Activated T-helper 1 cell treated with anti-CD3 and anti-CD28 coated beads, Interleukin-12 subunit alpha, Interleukin-12 subunit beta, Interleukin-2, Interleukin-4 antibody, amounts not matched to agents 30 ng/mL and 10 ng/mL and 1 ng/mL, durations not matched to agents 14 hours and 24 hours and 36 hours (primary cell): ENCODE measurements at regions of chr2 and their contacts with region 1.

Region 1: DNA sequence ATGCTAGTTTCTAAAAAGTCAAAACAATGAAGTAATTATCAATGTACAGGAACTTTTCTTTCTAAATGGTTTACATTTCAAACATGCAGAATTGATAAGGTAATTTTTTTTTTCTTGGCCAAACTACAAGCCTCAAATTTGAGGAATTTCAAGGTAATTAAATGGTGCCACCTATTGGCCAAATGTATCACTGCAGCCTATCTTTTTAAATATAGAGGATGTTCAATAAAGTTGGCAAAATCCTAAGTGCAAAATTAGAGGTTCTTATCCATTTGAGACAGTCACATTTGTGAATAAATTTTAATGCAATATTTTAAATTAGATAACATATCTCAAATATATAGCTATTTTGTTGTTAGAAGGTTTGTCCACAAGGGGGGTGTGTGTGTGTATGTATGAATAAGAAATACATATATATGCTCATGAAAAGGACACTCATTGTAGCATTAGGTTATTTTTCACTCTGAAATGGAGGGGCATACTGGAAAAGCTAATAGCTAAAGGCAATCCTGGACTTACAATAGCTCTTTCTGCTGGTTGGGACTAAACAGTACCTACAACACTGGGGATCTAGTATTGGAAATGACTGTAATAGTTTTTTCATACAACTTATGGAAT is 26.2 kb downstream of the MMADHC start:
- DNase-seq: no peak
- H3K4me3 Mint-ChIP-seq: no peak overlapping the region
- H3K27ac Mint-ChIP-seq: no peak overlapping the region
- H3K4me1 Mint-ChIP-seq: no peaks in the 10 kb centered on the region
- H3K27me3 Mint-ChIP-seq: peaks cover 4% of the 10 kb centered on the region

Region 2: DNA sequence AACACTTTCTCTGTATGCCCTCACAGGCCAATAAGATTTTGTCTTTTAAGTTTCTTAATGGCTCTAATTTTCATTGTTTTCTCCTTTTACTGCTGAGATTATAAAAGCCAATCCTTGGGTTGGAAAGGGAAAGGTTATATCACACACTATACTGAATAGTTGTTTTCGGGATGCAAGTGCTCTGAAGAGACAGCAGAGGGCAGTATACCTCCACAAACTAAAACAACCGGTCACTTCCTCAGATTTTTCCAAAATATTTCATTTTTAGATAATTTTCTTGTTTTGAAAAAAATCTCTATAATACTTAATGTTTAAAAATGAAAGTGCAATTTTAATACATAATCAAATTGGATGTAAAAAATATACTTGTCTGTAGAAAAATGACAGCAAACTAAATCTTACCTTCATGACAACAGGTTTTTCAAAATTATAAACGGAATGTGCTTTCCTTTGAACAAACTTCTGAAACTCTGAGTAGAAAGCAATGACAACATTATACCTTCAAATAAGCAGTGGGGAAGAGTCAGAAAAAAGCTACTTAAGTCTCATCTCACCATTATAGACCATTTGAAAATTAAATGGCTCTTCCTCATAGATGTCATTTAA is 1623.6 kb before region 1 on chr2:
- intact Hi-C with region 1: loop called (anchors 1 kb)
- DNase-seq: no peak
- H3K4me3 Mint-ChIP-seq: no peak overlapping the region
- H3K27ac Mint-ChIP-seq: no peak overlapping the region
- H3K4me1 Mint-ChIP-seq: no peaks in the 10 kb centered on the region
- H3K27me3 Mint-ChIP-seq: no peaks in the 10 kb centered on the region

Region 3: GRCh38 chr2:149017116-149017985 is 544.1 kb before region 1 on chr2:
- intact Hi-C with region 1: loop called (anchors 1 kb)
- DNase-seq: peak; percentile 52
- H3K4me3 Mint-ChIP-seq: no peak overlapping the region
- H3K27ac Mint-ChIP-seq: no peak overlapping the region
- H3K4me1 Mint-ChIP-seq: peaks cover 12% of the 10 kb centered on the region
- H3K27me3 Mint-ChIP-seq: no peaks in the 10 kb centered on the region

Region 4: GRCh38 chr2:149040451-149040850 is 521.0 kb before region 1 on chr2:
- intact Hi-C with region 1: loop called (anchors 1 kb)
- DNase-seq: no peak
- H3K4me3 Mint-ChIP-seq: no peak overlapping the region
- H3K27ac Mint-ChIP-seq: no peak overlapping the region
- H3K4me1 Mint-ChIP-seq: no peaks in the 10 kb centered on the region
- H3K27me3 Mint-ChIP-seq: peaks cover 62% of the 10 kb centered on the region

Region 5: DNA sequence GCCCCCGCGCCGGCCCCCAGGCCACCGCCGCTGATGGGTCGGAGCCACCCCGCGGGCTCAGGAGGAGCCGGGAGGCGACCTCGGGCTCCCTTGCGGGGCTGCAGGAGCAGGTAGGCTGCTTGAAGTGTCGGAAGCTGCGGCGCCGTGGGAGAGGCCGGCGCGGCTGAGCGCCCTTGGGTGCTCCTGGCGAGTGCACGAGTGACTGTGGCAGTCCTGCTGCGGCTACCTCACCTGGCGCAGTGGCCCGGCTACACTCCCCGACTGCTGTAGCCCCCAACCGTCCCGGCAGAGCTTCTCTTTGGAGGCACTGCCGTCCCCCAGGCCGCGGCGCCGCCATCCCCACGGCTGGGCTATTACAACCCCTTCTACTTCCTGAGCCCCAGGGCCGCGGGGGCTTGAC is 241.1 kb before region 1 on chr2:
- intact Hi-C with region 1: no loop called
- DNase-seq: no peak
- H3K4me3 Mint-ChIP-seq: no peak overlapping the region
- H3K27ac Mint-ChIP-seq: no peak overlapping the region
- H3K4me1 Mint-ChIP-seq: no peaks in the 10 kb centered on the region
- H3K27me3 Mint-ChIP-seq: peaks cover under 1% of the 10 kb centered on the region

Region 6: GRCh38 chr2:149430743-149431737 is 130.4 kb before region 1 on chr2:
- intact Hi-C with region 1: loop called (anchors 10 kb)
- DNase-seq: no peak
- H3K4me3 Mint-ChIP-seq: no peak overlapping the region
- H3K27ac Mint-ChIP-seq: no peak overlapping the region
- H3K4me1 Mint-ChIP-seq: no peaks in the 10 kb centered on the region
- H3K27me3 Mint-ChIP-seq: peaks cover 1% of the 10 kb centered on the region